KBM-7 (cell line): ENCODE measurements at regions of chr7 and their contacts with region 1.

Region 1: DNA sequence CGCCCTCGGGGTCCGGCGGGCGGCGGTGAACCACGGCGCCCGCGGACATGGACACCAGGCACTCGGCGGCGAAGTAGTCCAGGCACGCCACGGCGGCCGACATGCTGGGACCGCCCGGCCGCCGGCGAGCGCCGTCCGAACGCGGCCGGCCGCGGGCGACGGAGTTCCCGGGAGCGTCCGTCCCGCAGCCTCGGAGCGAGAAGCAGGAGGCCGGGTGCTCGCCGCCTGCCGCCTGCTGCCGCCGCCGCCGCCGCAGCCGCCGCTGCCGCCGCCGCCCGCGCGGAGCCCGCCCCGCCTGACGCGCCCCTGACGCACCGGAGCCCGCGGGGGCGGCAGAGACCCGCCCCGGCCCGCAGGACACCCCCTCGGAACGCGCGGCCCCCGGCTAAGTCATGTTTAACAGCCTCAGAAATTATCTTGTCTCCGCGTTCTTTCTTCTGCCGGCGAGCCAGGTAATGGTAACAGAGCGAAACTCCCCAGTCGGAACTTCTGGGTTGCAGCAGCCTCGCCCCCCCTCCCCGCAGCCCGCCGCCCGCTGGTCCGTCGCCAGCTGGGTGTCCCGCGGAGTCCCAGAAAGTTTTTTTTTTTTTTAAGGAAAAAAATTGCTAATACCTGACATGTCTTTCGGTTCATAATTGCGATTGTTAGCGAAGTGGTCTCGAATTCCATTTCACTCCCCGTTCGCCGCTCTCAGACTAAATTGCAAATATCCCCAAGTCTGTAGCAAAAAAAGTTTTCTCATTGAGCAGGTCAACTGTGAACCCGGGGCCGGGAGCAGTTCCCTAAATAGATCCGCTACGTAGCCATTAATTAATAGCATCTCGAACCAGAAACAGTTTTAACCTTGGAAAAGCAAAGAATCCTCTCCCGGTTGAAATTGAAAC is at the start of gene KLF14:
- DNase-seq: peak; percentile 49

Region 2: DNA sequence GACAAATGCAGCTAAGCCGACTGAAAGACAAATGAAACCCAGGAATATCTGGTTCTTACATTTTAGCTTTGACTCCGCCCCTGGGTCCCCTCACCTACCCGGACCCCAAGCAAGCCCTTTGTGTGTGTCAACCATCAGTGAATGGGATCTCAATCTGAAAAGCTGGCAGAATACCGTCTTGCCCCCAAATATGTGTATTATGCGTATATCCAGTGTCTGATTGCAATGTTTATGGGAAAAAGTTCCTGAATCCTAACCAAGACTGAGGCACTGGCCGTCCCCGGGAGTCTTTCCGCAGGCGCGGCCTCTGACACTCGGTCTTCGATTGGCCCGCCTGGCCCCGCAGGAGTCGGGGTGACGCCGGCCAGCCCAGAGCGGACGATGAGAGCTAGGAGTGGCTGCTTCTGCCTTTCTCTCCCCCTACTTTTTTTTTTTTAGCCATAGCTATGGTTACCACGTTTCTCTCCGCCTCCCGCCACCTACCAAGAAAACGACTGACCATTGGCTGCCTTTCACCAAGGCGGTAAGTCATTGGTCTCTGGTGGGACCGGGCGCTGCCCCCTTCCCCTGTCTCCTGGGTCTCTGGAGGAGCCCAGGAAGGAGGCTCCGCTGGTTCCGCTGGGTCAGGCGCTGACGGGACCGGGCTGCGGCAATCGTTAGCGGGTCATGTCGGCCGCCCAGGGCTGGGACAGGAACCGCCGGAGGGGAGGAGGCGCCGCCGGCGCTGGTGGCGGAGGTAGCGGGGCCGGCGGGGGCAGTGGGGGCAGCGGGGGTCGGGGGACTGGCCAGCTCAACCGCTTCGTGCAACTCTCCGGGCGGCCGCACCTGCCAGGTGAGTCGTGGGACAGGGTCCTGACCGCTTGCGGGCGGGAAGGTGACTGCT is 664.0 kb before region 1 on chr7 and contains the start of gene KLHDC10:
- in situ Hi-C with region 1: loop called (anchors 25 kb)
- DNase-seq: peak; percentile 100